Calu3 (cell line): ENCODE measurements at regions of chr17 and their contacts with region 1.

Region 1: GRCh38 chr17:58121925-58122324 is 26.3 kb upstream of the OR4D1 start:
- DNase-seq: peak; percentile 10
- H3K4me3 Mint-ChIP-seq: no peak overlapping the region
- H3K27ac Mint-ChIP-seq: no peak overlapping the region
- H3K4me1 Mint-ChIP-seq: no peaks in the 10 kb centered on the region
- H3K27me3 Mint-ChIP-seq: peaks cover 47% of the 10 kb centered on the region
- CTCF ChIP-seq: no peak

Region 2: DNA sequence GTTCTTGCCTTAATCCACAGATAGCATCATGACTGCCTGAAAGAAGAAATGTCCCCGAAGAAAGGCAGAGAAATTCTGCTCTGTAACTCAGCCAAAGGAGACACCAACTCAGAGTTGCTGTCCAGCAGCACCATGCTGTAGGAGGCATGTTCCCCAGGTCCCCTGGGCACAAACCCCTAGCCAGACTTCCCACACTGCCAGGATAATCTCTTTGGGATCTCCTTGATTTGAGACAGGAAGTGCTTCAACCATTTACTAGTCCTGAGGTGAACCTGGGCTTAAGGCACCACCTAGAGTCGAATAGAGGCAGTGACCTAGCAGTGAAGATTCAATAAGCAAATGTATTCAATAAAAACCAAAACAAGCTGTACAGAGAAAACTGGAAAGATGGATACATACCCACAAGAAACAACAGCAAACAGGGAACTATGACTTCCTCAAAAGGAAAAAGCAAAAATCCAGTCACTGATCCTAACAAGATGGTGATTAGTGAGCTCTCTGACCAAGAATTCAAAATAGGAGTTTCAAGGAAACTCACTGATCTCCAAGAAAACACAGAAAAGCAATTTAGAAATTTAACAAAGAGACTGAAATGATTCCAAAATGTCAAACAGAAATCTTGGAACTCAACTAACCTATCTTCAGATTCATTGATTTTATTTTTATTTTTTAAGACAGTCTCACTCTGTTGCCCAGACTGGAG is 50.6 kb after region 1 on chr17:
- CTCF ChIA-PET with region 1: interaction called, 3 read pairs
- intact Hi-C with region 1: loop called (anchors 1 kb)
- DNase-seq: peak; percentile 15
- H3K4me3 Mint-ChIP-seq: no peak overlapping the region
- H3K27ac Mint-ChIP-seq: no peak overlapping the region
- H3K4me1 Mint-ChIP-seq: no peaks in the 10 kb centered on the region
- H3K27me3 Mint-ChIP-seq: peaks cover 93% of the 10 kb centered on the region
- CTCF ChIP-seq: peak; percentile 38